Endothelial cell of umbilical vein (primary cell): ENCODE measurements at regions of chr3 and their contacts with region 1.

Region 1: GRCh38 chr3:155859859-155860258 is 5.6 kb upstream of the SLC33A1 start:
- DNase-seq: peak; percentile 38
- H3K4me3 ChIP-seq: no peak overlapping the region
- H3K27ac ChIP-seq: no peak overlapping the region
- H3K4me1 ChIP-seq: no peaks in the 10 kb centered on the region
- H3K27me3 ChIP-seq: no peaks in the 10 kb centered on the region
- CTCF ChIP-seq: peak; percentile 3 to 10
- POLR2A ChIP-seq: no peak

Region 2: DNA sequence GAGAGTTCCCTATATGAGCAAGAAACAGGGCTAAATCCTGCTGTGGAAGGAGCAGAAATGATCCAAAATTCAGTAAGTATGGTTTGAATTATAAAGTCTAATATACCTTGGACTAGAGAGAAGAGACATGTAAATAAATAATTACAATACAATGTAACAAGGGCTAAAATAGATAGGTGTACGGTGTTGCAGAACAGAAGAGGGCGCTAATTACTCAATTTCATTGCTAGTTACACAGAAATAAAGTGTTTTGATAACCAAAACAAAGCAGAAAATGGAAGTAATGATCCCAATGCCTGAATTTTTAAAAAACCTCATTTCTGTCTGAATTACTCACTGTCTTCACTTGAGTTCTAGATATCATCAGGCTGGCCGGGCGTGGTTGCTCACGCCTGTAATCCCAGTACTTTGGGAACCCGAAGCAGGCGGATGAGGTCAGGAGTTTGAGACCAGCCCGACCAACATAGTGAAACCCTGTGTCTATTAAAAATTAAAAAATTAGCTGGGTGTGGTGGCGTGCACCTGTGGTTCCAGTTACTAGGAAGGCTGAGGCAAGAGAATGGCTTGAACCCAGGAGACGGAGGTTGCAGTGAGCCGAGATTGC is 106.7 kb before region 1 on chr3:
- CTCF ChIA-PET with region 1: no interaction called
- POLR2A ChIA-PET with region 1: no interaction called
- dilution Hi-C with region 1: no loop called
- intact Hi-C with region 1: loop called (anchors 1 kb)
- DNase-seq: peak; percentile 50
- H3K4me3 ChIP-seq: no peak overlapping the region
- H3K27ac ChIP-seq: no peak overlapping the region
- H3K4me1 ChIP-seq: no peaks in the 10 kb centered on the region
- H3K27me3 ChIP-seq: peaks cover 0 to 2% of the 10 kb centered on the region in 2 experiments
- CTCF ChIP-seq: peak; percentile 46 to 49
- POLR2A ChIP-seq: no peak

Region 3: GRCh38 chr3:155843569-155843968 is 16.3 kb before region 1 on chr3:
- CTCF ChIA-PET with region 1: no interaction called
- POLR2A ChIA-PET with region 1: no interaction called
- dilution Hi-C with region 1: no loop called
- intact Hi-C with region 1: no loop called
- DNase-seq: no peak
- H3K4me3 ChIP-seq: no peak overlapping the region
- H3K27ac ChIP-seq: no peak overlapping the region
- H3K4me1 ChIP-seq: no peaks in the 10 kb centered on the region
- H3K27me3 ChIP-seq: no peaks in the 10 kb centered on the region
- CTCF ChIP-seq: no peak
- POLR2A ChIP-seq: no peak